WTC11 (cell line): ENCODE measurements at regions of chr5 and their contacts with region 1.

Region 1: GRCh38 chr5:38441453-38442246 is 114.8 kb downstream of the LIFR start:
- DNase-seq: peak; percentile 92
- ATAC-seq: peak; percentile 98
- H3K4me3 Mint-ChIP-seq: no peak overlapping the region
- H3K27ac Mint-ChIP-seq: no peak overlapping the region
- H3K4me1 Mint-ChIP-seq: peaks cover 4% of the 10 kb centered on the region
- H3K27me3 Mint-ChIP-seq: no peaks in the 10 kb centered on the region
- CTCF ChIP-seq: peak; percentile 86

Region 2: GRCh38 chr5:38157024-38157423 is 284.6 kb before region 1 on chr5:
- CTCF ChIA-PET with region 1: no interaction called
- POLR2A ChIA-PET with region 1: no interaction called
- DNase-seq: no peak
- ATAC-seq: peak; percentile 74
- H3K4me3 Mint-ChIP-seq: no peak overlapping the region
- H3K27ac Mint-ChIP-seq: no peak overlapping the region
- H3K4me1 Mint-ChIP-seq: no peaks in the 10 kb centered on the region
- H3K27me3 Mint-ChIP-seq: no peaks in the 10 kb centered on the region
- CTCF ChIP-seq: no peak

Region 3: DNA sequence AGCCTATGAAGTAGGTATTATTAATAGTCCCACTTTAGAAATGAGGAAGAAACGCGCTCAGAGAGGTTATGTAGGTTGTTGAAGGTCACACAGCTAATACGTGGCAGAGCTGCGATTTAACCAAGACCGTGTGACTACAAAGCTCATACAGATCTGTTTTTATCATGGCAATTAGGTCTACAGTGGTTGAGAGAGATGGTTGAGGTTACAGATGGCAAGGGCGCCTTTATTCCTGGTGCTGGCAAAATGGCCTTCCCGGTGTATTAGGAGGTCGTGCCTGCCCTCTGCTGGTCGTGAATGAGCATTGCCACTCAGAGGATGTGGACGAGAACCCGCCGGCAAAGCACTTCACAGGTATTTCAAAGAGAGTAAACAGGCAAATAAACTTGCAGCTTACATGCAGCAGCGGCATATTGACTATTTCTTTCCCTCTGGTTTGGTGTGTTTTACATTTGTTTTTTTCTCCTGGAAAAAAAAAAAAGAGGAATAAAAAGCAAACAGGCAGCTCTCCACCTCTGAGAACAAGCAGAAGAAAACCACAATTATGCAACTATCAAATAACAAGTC is 248.6 kb before region 1 on chr5:
- CTCF ChIA-PET with region 1: no interaction called
- POLR2A ChIA-PET with region 1: no interaction called
- DNase-seq: peak; percentile 77
- ATAC-seq: peak; percentile 85
- H3K4me3 Mint-ChIP-seq: no peak overlapping the region
- H3K27ac Mint-ChIP-seq: no peak overlapping the region
- H3K4me1 Mint-ChIP-seq: peaks cover 18% of the 10 kb centered on the region
- H3K27me3 Mint-ChIP-seq: peaks cover 6% of the 10 kb centered on the region; the same call in 1 of the 2 replicates
- CTCF ChIP-seq: peak; percentile 90

Region 4: GRCh38 chr5:38420691-38421390 is 20.8 kb before region 1 on chr5:
- CTCF ChIA-PET with region 1: interaction called, 43 read pairs
- POLR2A ChIA-PET with region 1: no interaction called
- DNase-seq: peak; percentile 54
- ATAC-seq: peak; percentile 83
- H3K4me3 Mint-ChIP-seq: no peak overlapping the region
- H3K27ac Mint-ChIP-seq: no peak overlapping the region
- H3K4me1 Mint-ChIP-seq: peaks cover 22% of the 10 kb centered on the region
- H3K27me3 Mint-ChIP-seq: no peaks in the 10 kb centered on the region
- CTCF ChIP-seq: peak; percentile 59

Region 5: DNA sequence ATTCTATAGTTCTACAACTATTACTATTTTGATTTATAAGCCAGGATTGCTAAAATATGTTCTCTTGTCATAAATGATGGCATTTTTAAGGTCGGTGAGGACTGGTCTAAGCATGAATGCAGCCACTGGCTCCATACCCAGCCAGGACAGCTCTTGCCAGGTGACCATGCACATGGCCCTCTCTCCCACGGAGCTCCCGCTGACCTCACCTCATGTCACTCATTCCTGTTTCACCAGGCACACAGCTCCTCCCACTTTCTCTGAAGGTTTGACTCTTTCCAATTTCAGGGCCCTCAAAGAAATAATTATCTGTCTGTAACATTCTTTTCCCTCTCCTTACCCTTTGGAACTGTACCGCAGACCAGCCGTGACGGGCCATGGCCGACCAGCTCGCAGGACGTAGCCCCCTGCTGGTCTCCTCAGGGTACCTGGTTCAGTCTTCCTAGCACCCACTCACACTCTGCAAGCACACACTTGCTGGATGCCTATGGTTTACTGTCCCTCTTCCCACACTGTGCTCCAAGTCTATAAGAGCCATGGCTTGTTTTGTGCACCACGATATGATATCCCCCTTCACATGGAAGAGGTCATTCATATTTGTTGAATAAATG is 42.2 kb after region 1 on chr5:
- CTCF ChIA-PET with region 1: interaction called, 19 read pairs
- POLR2A ChIA-PET with region 1: no interaction called
- DNase-seq: no peak
- ATAC-seq: peak; percentile 76
- H3K4me3 Mint-ChIP-seq: no peak overlapping the region
- H3K27ac Mint-ChIP-seq: no peak overlapping the region
- H3K4me1 Mint-ChIP-seq: 0 out of 2 replicates have a peak, but pooled peaks cover 5% of the 10 kb centered on the region
- H3K27me3 Mint-ChIP-seq: no peaks in the 10 kb centered on the region
- CTCF ChIP-seq: no peak

Region 6: GRCh38 chr5:38551030-38552017 is 109.7 kb after region 1 on chr5:
- CTCF ChIA-PET with region 1: interaction called, 36 read pairs
- POLR2A ChIA-PET with region 1: no interaction called
- DNase-seq: no peak
- ATAC-seq: peak; percentile 81
- H3K4me3 Mint-ChIP-seq: no peak overlapping the region
- H3K27ac Mint-ChIP-seq: peak overlapping the region; percentile 79; the same call in 1 of the 2 replicates
- H3K4me1 Mint-ChIP-seq: peaks cover 36% of the 10 kb centered on the region
- H3K27me3 Mint-ChIP-seq: peaks cover 4% of the 10 kb centered on the region; the same call in 1 of the 2 replicates
- CTCF ChIP-seq: peak; percentile 58; the same call in 1 of the 2 replicates

Region 7: GRCh38 chr5:38672059-38672788 is 230.6 kb after region 1 on chr5:
- CTCF ChIA-PET with region 1: interaction called, 26 read pairs
- POLR2A ChIA-PET with region 1: no interaction called
- DNase-seq: no peak
- ATAC-seq: no peak
- H3K4me3 Mint-ChIP-seq: no peak overlapping the region
- H3K27ac Mint-ChIP-seq: no peak overlapping the region
- H3K4me1 Mint-ChIP-seq: no peaks in the 10 kb centered on the region
- H3K27me3 Mint-ChIP-seq: no peaks in the 10 kb centered on the region
- CTCF ChIP-seq: no peak

Region 8: GRCh38 chr5:38809388-38810359 is 368.0 kb after region 1 on chr5:
- CTCF ChIA-PET with region 1: interaction called, 125 read pairs
- POLR2A ChIA-PET with region 1: interaction called, 5 read pairs
- DNase-seq: peak; percentile 81
- ATAC-seq: peak; percentile 97
- H3K4me3 Mint-ChIP-seq: no peak overlapping the region
- H3K27ac Mint-ChIP-seq: no peak overlapping the region
- H3K4me1 Mint-ChIP-seq: peaks cover 15% of the 10 kb centered on the region
- H3K27me3 Mint-ChIP-seq: peaks cover 4% of the 10 kb centered on the region; the same call in 1 of the 2 replicates
- CTCF ChIP-seq: peak; percentile 81

Region 9: DNA sequence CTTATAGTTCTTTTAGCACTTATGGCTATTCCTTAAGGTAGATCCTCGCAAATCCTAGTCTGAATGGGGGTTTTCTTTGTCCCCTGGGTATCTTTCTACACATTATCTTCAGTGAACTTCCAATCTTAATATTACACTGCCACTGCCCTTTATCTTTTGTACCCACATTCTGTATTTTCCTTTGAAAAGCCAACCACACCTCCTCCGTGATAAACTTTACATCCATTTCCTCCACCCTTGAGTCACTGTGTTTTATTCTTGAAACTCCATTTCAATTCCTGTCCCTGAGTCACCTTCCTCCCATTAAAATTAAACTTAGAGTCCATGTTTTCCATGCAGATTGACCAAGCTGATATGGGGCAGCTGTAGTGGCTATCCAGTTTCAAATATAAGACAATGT is 675.8 kb after region 1 on chr5:
- CTCF ChIA-PET with region 1: no interaction called
- POLR2A ChIA-PET with region 1: no interaction called
- DNase-seq: no peak
- ATAC-seq: no peak
- H3K4me3 Mint-ChIP-seq: no peak overlapping the region
- H3K27ac Mint-ChIP-seq: no peak overlapping the region
- H3K4me1 Mint-ChIP-seq: no peaks in the 10 kb centered on the region
- H3K27me3 Mint-ChIP-seq: no peaks in the 10 kb centered on the region
- CTCF ChIP-seq: no peak